ENCODE measurements at regions of chr2 and their contacts with region 1.

Region 1: GRCh38 chr2:107751936-107752335 is 74.8 kb upstream of the RGPD4 start:
- DNase-seq: no peak
- H3K4me3 ChIP-seq: no peak overlapping the region
- H3K27ac ChIP-seq: no peak overlapping the region
- H3K4me1 ChIP-seq: no peaks in the 10 kb centered on the region
- H3K27me3 ChIP-seq: no peaks in the 10 kb centered on the region
- CTCF ChIP-seq: no peak
- POLR2A ChIP-seq: no peak

Region 2: DNA sequence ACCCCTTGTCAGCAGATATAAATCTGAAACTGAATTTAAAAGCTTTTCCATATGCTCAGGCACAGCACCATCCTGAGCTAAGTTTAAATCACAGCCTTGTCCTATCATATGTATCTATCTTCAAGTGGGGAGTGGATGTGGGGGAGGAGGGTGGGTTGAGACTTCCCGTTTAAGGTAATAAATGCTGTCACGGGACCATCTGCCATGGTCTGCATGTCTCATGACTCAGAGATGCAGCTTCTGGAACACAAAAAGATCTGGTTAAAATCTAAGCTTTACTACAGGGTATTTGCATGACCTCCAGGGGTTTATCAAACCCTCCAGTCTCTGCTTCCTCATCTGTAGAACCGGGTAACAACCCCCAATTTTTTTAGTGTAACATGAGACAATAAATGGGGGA is 488.3 kb before region 1 on chr2:
- intact Hi-C with region 1: loop called (anchors 5 kb)
- DNase-seq: no peak
- H3K4me3 ChIP-seq: no peak overlapping the region
- H3K27ac ChIP-seq: no peak overlapping the region
- H3K4me1 ChIP-seq: no peaks in the 10 kb centered on the region
- H3K27me3 ChIP-seq: no peaks in the 10 kb centered on the region
- CTCF ChIP-seq: no peak
- POLR2A ChIP-seq: no peak

Measured in vagina (tissue), 2 donors.